ENCODE measurements at regions of chr21 and their contacts with region 1.

Region 1: DNA sequence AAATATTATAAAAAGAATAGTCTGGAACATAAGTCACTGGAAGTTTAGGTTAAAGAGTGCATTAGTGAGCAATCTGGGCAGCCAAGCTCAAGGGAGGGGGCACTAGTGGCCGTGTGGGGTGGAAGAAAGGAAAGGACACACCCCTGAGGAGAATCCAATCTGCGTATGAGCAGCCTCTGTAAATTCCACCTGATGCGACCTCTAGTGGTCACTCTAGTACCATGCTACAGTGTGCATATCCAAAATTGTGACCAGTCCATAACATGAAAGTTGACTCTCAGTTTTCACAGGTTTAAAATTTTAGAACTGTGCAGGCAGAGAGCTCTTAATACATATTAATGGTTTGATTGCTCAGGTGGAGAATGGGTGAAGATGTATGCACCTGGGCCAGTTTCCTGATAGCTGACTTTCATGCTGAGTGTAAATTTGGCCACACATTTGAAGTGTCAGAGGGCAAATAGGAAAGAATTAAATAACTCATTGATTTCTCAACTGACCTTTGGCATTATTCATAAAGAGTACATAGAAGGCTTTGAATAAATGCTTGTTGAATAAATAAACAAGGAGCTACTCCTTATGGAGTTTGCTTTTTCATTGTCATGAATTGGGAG is 105.9 kb upstream of the C21orf91 start:
- DNase-seq: peak; percentile 67 to 85 (median 83)
- H3K4me3 ChIP-seq: no peak overlapping the region
- H3K27ac ChIP-seq: no peak overlapping the region
- H3K4me1 ChIP-seq: no peaks in the 10 kb centered on the region
- H3K27me3 ChIP-seq: no peaks in the 10 kb centered on the region

Region 2: DNA sequence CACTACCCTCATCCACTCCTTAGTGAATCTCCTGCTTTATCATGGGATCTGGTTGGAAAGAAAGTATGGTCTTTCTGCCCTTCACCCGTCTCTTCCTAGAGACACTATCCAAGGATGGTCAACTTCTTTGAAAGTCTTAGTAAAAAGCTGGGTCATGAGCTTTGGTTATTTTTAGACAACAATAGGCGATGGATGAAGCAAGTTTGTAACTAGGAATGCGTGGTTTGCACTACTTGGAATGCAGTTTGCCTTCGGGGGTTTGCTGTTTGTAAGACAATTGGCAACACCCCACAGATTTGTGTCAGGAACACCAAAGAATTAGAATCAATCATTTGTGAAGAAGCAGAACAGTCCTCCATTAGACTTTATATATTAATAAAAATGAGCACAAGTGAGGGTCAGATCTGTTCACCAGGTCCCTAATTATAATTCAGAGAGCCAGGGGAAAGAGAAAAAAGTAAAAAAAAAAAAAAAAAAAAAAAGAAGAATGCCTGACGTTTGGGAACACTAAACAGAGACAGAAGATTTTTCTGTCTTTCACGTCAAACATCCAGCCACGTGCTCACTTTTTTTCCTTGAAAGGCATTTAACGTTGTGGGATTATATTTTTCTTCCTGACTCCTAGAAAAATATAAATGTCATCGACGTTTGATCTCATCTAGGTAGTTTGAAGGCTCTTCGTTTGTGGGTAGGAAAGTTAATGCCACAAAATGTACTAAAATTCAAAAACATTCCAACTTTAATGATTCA is 251.7 kb before region 1 on chr21:
- CTCF ChIA-PET with region 1: interaction called, 19 read pairs
- POLR2A ChIA-PET with region 1: no interaction called
- DNase-seq: no peak
- H3K4me3 ChIP-seq: no peak overlapping the region
- H3K27ac ChIP-seq: no peak overlapping the region
- H3K4me1 ChIP-seq: no peaks in the 10 kb centered on the region
- H3K27me3 ChIP-seq: peaks cover 0 to 2% (median 0%) of the 10 kb centered on the region in 5 experiments

Region 3: DNA sequence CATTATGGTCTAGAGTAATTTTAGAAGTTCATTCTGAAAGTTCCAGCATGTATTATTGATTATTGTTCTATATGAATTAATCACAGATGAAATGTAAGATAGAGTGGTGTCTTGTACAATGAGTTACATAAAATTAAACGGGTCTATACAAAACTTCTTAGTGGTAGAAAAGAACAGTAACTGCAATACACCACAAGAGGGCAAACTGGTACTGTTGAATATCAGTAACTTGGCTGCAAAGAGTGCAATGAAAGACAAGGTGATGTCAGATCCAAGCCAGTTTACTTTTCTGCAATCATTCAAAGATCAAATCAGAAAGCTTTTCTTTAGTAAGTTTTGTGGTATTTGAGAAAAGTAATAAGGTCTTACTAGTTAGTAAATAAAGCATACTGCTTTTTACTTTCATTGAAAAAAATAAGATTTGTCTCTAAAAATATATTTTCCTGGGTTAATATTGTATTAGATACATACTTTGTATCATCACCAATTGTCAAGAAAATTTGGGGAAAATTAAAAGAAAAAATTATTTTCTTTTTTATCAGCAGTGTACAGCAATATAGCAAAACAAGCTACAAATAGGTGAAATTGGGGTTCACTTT is 246.0 kb before region 1 on chr21:
- CTCF ChIA-PET with region 1: interaction called, 19 read pairs
- POLR2A ChIA-PET with region 1: no interaction called
- DNase-seq: peak; percentile 77 to 89 (median 86)
- H3K4me3 ChIP-seq: no peak overlapping the region
- H3K27ac ChIP-seq: no peak overlapping the region
- H3K4me1 ChIP-seq: peaks cover 0 to 5% (median 2%) of the 10 kb centered on the region in 4 experiments
- H3K27me3 ChIP-seq: peaks cover 0 to 2% (median 0%) of the 10 kb centered on the region in 5 experiments

Region 4: DNA sequence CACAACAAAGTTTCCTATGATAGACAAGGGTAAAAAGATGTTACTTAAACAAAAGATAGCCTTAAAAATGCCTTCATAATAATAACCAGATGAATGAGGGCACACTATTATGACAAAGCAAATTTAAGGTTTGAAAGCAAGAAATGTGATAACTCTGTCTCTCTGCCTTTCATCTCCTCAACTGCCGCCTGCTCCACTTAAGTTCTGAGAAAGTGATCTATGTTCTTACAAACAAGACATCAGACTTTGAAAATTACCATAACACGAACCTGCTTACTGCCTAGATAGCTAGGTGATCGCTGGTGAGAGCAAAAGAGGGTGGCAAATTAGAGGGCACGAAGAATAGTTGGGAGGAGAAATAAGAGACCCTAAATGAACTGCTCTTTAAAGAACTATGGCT is 119.1 kb before region 1 on chr21:
- CTCF ChIA-PET with region 1: no interaction called
- POLR2A ChIA-PET with region 1: no interaction called
- DNase-seq: no peak
- H3K4me3 ChIP-seq: no peak overlapping the region
- H3K27ac ChIP-seq: peak overlapping the region in 1 of 2 experiments; percentile 31
- H3K4me1 ChIP-seq: peaks cover 0 to 2% (median 0%) of the 10 kb centered on the region in 4 experiments
- H3K27me3 ChIP-seq: no peaks in the 10 kb centered on the region

Region 5: GRCh38 chr21:17903029-17903806 is 21.9 kb before region 1 on chr21:
- CTCF ChIA-PET with region 1: interaction called, 11 read pairs
- POLR2A ChIA-PET with region 1: no interaction called
- DNase-seq: peak; percentile 46 to 69 (median 69)
- H3K4me3 ChIP-seq: no peak overlapping the region
- H3K27ac ChIP-seq: no peak overlapping the region
- H3K4me1 ChIP-seq: peaks cover 0 to 5% (median 2%) of the 10 kb centered on the region in 4 experiments
- H3K27me3 ChIP-seq: no peaks in the 10 kb centered on the region

Region 6: GRCh38 chr21:17911628-17912027 is 13.5 kb before region 1 on chr21:
- CTCF ChIA-PET with region 1: interaction called, 10 read pairs
- POLR2A ChIA-PET with region 1: no interaction called
- DNase-seq: no peak
- H3K4me3 ChIP-seq: no peak overlapping the region
- H3K27ac ChIP-seq: no peak overlapping the region
- H3K4me1 ChIP-seq: no peaks in the 10 kb centered on the region
- H3K27me3 ChIP-seq: no peaks in the 10 kb centered on the region

Region 7: DNA sequence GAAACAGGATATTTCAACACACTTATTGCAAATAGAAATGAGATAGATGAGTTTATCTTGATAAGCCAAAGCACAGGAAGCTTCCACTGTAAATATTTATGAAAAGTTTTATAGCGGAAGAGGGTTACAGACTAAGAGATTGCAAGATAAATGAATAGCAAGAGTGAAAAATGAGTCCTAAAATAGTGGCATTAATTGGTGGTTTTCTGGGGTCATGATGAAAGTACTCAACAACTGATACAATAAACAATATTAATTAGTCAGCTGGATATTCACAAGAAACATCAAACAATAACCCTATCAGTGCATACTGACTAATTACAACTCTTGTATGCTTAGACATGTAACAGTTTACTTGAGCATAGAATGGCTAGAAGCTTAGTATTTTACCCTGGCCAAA is 164.7 kb after region 1 on chr21:
- CTCF ChIA-PET with region 1: no interaction called
- POLR2A ChIA-PET with region 1: no interaction called
- DNase-seq: peak in 2 of 3 donors; percentile 1 to 13
- H3K4me3 ChIP-seq: no peak overlapping the region
- H3K27ac ChIP-seq: no peak overlapping the region
- H3K4me1 ChIP-seq: peaks cover 0 to 16% (median 6%) of the 10 kb centered on the region in 4 experiments
- H3K27me3 ChIP-seq: no peaks in the 10 kb centered on the region

Measured in common myeloid progenitor, CD34-positive (primary cell).